ENCODE measurements at regions of chr11 and their contacts with region 1.

Region 1: DNA sequence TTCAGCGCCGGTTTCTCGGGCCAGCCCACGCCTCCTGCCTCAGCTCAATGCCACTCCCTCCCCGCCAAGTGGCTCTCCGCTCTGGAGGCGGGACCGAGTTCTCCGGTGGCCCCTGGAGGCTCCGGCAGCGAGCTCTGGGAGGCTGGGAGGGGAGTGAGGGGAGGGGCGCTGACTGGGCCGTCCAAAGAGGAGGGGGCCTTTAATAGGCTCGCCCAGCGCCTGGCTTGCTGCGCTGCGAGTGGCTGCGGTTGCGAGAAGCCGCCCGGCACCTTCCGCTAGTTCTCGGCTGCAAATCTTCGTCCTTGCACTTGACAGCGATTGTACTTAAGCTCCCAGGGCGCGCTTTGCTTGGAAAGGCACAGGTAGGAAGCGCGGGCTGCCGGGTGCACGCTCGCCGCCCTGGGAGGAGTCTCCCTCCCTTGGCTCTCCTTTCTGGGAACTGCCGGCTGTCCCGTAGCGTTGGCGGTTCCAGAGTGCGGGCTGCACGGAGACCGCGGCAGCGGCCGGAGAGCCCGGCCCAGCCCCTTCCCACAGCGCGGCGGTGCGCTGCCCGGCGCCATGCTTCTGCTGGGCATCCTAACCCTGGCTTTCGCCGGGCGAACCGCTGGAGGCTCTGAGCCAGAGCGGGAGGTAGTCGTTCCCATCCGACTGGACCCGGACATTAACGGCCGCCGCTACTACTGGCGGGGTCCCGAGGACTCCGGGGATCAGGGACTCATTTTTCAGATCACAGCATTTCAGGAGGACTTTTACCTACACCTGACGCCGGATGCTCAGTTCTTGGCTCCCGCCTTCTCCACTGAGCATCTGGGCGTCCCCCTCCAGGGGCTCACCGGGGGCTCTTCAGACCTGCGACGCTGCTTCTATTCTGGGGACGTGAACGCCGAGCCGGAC is at the start of gene ADAMTS15:
- DNase-seq: peak; percentile 92
- ATAC-seq: peak; percentile 83 to 86
- total RNA-seq, gene ADAMTS15: 29.8 to 32.0 TPM

Region 2: DNA sequence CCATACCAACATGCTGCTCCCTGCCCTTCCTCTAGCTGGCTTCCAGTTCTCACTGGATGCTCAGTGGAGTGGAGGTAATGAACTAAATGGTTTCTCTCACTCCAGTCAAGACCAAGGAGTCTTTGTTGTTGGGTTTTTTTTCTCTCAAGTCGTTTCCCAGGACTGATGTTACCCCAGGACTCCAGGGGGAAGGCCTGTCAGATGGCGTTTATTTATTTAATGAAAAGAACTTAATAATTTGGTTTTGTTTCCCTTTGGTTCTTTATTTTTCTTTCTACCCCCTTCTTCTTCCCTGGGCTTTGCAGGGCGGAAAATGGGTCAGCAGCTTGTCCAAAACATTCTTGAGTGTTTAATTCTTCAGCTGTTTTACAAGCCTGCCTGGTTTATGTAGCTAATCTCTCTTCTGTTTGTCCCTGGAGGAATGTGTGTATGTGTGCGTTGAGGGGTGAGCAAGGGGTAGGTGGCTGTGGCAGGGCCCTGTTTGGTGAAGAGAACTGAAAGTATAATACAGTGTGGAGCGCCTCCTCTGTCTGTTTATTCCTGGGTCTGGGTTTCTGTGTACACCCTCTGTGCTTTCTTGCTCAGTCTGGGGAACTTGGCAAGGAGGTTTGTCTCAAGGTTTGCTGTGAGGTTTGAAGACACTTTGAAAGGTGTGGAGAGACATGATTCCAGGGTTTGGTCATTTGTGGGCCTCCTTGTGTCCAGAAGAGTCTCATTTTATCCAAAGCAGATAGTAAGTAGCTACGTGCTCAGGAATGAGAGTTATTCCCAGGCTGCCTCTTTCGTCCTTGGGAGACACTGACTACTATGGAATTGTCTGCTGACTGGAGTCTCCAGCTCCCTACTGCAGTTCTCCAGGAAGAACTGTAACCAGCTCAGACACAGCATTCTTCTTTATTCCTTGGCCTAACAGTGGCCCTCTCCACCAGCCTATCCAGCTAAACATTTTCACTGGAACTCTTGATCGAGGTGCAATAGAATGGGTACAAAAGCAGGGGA is 175.3 kb after region 1 on chr11:
- intact Hi-C with region 1: no loop called
- DNase-seq: no peak
- ATAC-seq: peak; percentile 85 to 87

Region 3: GRCh38 chr11:130653838-130654636 is 205.4 kb after region 1 on chr11:
- intact Hi-C with region 1: loop called in 1 of 2 experiments (anchors 5 kb)
- DNase-seq: peak; percentile 87
- ATAC-seq: peak; percentile 95 to 96

Region 4: GRCh38 chr11:130737866-130738431 is 289.3 kb after region 1 on chr11:
- intact Hi-C with region 1: loop called in 1 of 2 experiments (anchors 10 kb)
- DNase-seq: peak; percentile 74
- ATAC-seq: peak; percentile 94 to 97

Region 5: GRCh38 chr11:130817330-130817944 is 368.8 kb after region 1 on chr11:
- intact Hi-C with region 1: no loop called
- DNase-seq: no peak
- ATAC-seq: no peak

Region 6: DNA sequence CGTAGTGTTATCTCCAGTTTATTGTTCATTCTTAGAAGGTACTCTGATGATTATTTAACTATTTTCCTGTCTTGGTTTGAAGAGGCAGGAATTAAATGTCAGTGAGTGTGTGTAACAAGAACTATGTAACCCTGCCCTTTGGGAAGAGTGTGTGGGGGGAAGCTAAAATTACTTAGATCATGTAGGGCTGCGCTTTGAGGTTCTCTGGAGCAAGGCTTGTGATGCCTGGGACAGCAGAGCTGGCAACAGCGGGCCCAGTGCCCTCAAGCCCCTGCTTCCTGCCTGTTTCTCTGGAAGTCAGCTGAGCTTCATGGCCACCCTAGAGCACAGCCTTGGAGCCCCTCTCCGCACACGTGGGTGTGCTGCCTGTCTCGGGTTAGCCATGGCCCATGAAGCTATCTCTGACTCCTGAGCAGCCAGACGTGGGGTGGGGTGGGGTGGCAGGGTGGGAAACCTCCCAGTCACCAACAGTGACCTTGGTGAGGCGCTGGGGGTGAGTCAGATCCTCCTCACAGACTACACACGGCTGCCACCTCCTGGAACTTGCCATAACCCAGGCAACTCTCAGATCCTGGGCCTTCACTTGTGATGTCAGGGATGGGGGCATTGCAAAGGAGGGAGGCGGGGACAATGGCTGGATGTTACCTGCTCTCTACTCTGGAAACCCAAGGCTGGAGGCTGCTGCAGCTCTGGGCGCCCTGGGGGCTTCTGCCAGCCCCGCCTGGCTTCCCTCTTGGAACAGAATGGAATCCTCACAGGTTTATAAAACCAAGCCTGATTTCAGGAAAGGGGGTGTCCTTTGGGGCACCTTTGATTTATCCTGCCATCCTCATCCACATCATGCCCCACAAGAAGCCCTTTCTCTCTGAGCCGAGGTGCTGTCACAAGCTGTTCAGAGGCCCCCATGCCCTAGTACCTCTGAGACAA is 379.1 kb after region 1 on chr11:
- intact Hi-C with region 1: loop called in 1 of 2 experiments (anchors 5 kb)
- DNase-seq: peak; percentile 81
- ATAC-seq: peak; percentile 83 to 91